Left ventricle myocardium inferior (tissue), 1 donor: ENCODE measurements at regions of chr12 and their contacts with region 1.

Region 1: GRCh38 chr12:50351120-50352043 is 45.0 kb downstream of the FAM186A start:
- DNase-seq: no peak
- H3K4me3 ChIP-seq: peak overlapping the region; percentile 19
- H3K27ac ChIP-seq: no peak overlapping the region
- H3K4me1 ChIP-seq: peaks cover 12% of the 10 kb centered on the region
- H3K27me3 ChIP-seq: no peaks in the 10 kb centered on the region
- CTCF ChIP-seq: no peak

Region 2: GRCh38 chr12:50661300-50662115 is 310.1 kb after region 1 on chr12:
- intact Hi-C with region 1: loop called (anchors 10 kb)
- DNase-seq: no peak
- H3K4me3 ChIP-seq: no peak overlapping the region
- H3K27ac ChIP-seq: no peak overlapping the region
- H3K4me1 ChIP-seq: no peaks in the 10 kb centered on the region
- H3K27me3 ChIP-seq: no peaks in the 10 kb centered on the region
- CTCF ChIP-seq: no peak